ENCODE measurements at regions of chr3 and their contacts with region 1.

Region 1: DNA sequence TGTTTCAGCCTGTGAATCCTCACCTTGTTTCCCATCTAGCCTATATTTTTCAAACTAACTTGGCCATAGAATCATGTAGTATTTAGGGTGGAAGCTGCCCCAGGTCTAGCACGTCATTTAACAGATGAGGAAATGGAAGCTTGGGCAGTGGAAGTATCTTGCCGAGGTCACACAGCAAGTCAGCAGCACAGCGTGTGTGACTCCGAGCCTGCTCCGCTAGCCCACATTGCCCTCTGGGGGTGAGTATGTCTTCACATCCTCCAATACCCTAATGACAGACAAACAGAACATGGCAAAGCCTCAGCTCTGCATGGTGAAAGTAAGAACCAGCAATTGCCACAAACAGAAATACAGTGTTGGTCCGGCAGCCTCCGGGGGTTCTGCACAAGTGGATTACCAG is 2.2 kb upstream of the CCR5 start:
- DNase-seq: peak; percentile 59
- CTCF ChIP-seq: peak; percentile 47

Region 2: GRCh38 chr3:46058981-46059380 is 309.6 kb before region 1 on chr3:
- CTCF ChIA-PET with region 1: no interaction called
- POLR2A ChIA-PET with region 1: no interaction called
- DNase-seq: no peak
- CTCF ChIP-seq: no peak

Region 3: DNA sequence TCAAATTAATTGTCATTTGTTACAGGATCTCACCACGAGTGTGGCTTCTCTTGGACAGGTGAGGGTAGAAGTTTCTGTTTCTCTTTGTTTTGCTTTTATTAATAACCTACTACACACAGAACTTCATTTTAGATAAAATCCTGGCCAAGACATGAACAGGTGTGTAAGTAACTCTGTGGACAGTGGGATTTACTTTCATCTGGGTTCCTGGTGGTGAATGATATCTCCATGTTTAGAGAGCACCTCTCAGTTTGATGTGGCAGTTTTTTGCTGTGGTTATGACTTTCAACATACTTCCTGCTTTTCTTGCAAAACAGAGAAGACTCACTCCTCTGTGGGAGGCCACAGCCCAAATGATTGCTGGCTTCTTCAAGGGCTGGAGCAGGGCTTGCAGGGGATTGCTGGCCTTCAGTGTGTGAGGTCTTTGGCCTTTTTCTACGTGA is 270.2 kb before region 1 on chr3:
- CTCF ChIA-PET with region 1: interaction called, 17 read pairs
- POLR2A ChIA-PET with region 1: interaction called, 3 read pairs
- DNase-seq: peak; percentile 60
- CTCF ChIP-seq: no peak

Region 4: GRCh38 chr3:46214751-46215352 is 153.7 kb before region 1 on chr3:
- CTCF ChIA-PET with region 1: interaction called, 50 read pairs
- POLR2A ChIA-PET with region 1: no interaction called
- DNase-seq: no peak
- CTCF ChIP-seq: peak; percentile 31

Region 5: GRCh38 chr3:46276502-46277099 is 92.0 kb before region 1 on chr3:
- CTCF ChIA-PET with region 1: interaction called, 39 read pairs
- POLR2A ChIA-PET with region 1: no interaction called
- DNase-seq: peak; percentile 63
- CTCF ChIP-seq: peak; percentile 69